K562 (cell line): ENCODE measurements at regions of chr17 and their contacts with region 1.

Region 1: DNA sequence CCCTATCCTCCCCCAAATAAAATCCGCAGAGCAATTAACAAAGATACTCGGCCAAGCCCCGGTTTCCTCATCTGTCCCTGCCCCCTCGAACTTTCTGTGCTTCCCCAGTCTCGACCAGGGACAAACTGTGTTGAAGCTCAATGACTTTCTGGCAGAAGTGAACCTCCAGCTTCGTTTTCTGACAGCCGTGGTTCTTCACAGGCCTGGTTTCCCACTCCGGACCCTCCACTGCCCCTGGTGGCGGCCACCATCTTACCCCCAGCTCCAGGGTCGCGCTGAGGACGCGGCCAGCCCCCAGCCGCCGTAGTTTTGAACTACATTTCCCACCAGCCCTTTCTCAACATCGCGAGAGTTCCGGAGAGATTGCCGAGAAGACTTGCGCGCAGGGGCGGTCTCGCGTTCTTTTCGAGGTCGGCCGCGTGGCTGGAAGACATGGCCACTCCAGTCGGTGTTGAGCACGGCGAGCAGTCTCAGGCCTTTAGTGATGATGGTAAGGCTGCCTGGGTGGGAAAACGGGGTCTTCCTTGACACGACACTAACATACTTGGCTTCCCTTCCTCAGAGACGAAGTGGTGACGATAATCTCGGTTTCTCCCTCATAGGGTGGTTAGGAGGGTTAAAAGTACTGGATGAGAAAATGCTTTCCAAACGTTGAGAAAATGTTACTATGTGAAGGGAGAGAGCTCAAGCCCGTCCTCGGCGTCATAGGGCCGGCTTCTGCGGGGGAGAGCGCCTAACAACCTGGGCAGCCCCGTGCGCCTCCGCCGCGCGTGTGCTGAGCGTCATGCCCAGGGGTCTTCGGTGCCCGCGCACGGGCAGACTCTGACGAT is 17.7 kb downstream of the PRCD start:
- DNase-seq: peak; percentile 85 to 98 (median 89)
- ATAC-seq: peak; percentile 92
- H3K4me3 ChIP-seq: peak overlapping the region; percentile 57
- H3K27ac ChIP-seq: peak overlapping the region; percentile 94
- H3K4me1 ChIP-seq: peaks cover 22 to 31% of the 10 kb centered on the region in 2 experiments
- H3K27me3 ChIP-seq: no peaks in the 10 kb centered on the region
- CTCF ChIP-seq: peak; percentile 74 to 84 (median 75)
- EP300 ChIP-seq: no peak; the same call in 1 of the 2 replicates
- POLR2A ChIP-seq: peak; percentile 99
- RAD21 ChIP-seq: peak in 1 of 2 experiments; percentile 17; a peak in 1 of 4 replicates

Region 2: DNA sequence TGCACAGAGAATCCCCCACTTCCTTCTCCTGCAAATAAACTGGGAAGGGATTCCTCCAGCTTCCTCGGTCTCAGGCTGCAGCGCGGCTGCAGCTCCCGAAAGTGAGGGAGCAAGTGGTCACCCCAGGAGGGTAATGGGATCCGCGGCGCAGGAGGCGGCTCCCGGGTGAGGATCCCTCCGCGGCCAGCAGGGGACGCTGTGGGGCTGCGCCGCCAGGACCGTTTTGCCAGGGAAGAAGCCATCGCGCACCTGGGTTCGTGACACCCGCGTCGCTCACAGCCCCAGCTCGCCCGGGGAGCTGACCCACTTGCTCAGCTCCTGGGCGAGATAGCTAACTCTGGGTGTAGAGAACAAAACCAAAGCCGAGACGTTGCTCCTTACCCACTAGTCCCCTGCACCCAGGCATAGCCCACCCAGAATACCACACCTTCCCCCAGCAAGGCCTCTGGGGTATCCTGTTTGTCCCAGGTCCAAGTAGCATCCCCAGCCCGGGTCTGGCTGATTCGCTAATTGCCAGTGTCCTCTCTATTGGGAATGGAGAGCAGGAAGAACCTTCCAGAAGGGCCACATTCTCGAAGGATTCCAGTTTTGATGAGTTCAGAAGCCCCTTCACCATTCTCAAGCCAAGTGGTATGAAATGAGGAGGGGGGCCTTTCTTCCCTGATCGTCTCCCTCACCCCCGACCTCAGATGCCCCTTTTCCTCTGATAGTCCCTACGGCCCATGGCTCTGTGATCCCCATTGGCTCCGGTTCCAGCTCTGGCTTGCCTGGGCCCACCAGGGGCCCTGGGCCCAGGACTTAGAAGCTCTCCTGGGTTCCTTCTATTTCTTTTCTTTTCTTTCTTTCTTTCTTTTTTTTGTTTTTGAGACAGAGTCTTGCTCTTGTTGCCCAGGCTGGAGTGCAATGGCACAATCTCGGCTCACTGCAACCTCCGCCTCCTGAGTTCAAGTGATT is 34.2 kb before region 1 on chr17:
- CTCF ChIA-PET with region 1: no interaction called
- POLR2A ChIA-PET with region 1: interaction called, 18 read pairs
- in situ Hi-C with region 1: no loop called
- intact Hi-C with region 1: no loop called
- DNase-seq: peak; percentile 84 to 91 (median 89)
- ATAC-seq: peak; percentile 96
- H3K4me3 ChIP-seq: no peak overlapping the region
- H3K27ac ChIP-seq: no peak overlapping the region
- H3K4me1 ChIP-seq: peaks cover 5 to 25% of the 10 kb centered on the region in 2 experiments; a peak in 4 of 5 replicates
- H3K27me3 ChIP-seq: no peaks in the 10 kb centered on the region
- CTCF ChIP-seq: peak; percentile 97 to 99 (median 98)
- EP300 ChIP-seq: no peak
- POLR2A ChIP-seq: no peak
- RAD21 ChIP-seq: peak; percentile 93 to 98

Region 3: GRCh38 chr17:76547184-76547641 is 10.4 kb before region 1 on chr17:
- CTCF ChIA-PET with region 1: no interaction called
- POLR2A ChIA-PET with region 1: interaction called, 12 read pairs
- in situ Hi-C with region 1: no loop called
- intact Hi-C with region 1: no loop called
- DNase-seq: peak; percentile 70 to 82 (median 74)
- ATAC-seq: peak; percentile 94
- H3K4me3 ChIP-seq: no peak overlapping the region
- H3K27ac ChIP-seq: no peak overlapping the region
- H3K4me1 ChIP-seq: peaks cover 0 to 39% of the 10 kb centered on the region in 2 experiments; a peak in 3 of 5 replicates
- H3K27me3 ChIP-seq: no peaks in the 10 kb centered on the region
- CTCF ChIP-seq: peak; percentile 84 to 88 (median 86)
- EP300 ChIP-seq: no peak
- POLR2A ChIP-seq: no peak
- RAD21 ChIP-seq: peak; percentile 72 to 90

Region 4: GRCh38 chr17:76597728-76598474 is 40.3 kb after region 1 on chr17:
- CTCF ChIA-PET with region 1: no interaction called
- POLR2A ChIA-PET with region 1: interaction called, 6 read pairs
- in situ Hi-C with region 1: no loop called
- intact Hi-C with region 1: loop called (anchors 5 kb)
- DNase-seq: no peak
- ATAC-seq: no peak
- H3K4me3 ChIP-seq: no peak overlapping the region
- H3K27ac ChIP-seq: no peak overlapping the region
- H3K4me1 ChIP-seq: peaks cover 21 to 30% of the 10 kb centered on the region in 2 experiments
- H3K27me3 ChIP-seq: no peaks in the 10 kb centered on the region
- CTCF ChIP-seq: no peak
- EP300 ChIP-seq: no peak
- POLR2A ChIP-seq: no peak
- RAD21 ChIP-seq: no peak

Region 5: GRCh38 chr17:76681222-76682137 is 123.9 kb after region 1 on chr17:
- CTCF ChIA-PET with region 1: interaction called, 4 read pairs
- POLR2A ChIA-PET with region 1: interaction called, 18 read pairs
- in situ Hi-C with region 1: no loop called
- intact Hi-C with region 1: loop called (anchors 2 kb)
- DNase-seq: peak; percentile 66 to 87 (median 74)
- ATAC-seq: peak; percentile 89
- H3K4me3 ChIP-seq: no peak overlapping the region
- H3K27ac ChIP-seq: no peak overlapping the region
- H3K4me1 ChIP-seq: peaks cover 18 to 53% of the 10 kb centered on the region in 2 experiments
- H3K27me3 ChIP-seq: no peaks in the 10 kb centered on the region
- CTCF ChIP-seq: peak; percentile 91 to 95 (median 91)
- EP300 ChIP-seq: no peak
- POLR2A ChIP-seq: no peak
- RAD21 ChIP-seq: peak; percentile 86 to 94